Activated T-helper 2 cell treated with anti-CD3 and anti-CD28 coated beads, Interferon-gamma antibody, Interleukin-2, Interleukin-4, amounts not matched to agents 10 μg/mL and 5 μg/mL and 100 μg/mL, durations not matched to agents 14 hours and 24 hours and 36 hours (primary cell): ENCODE measurements at regions of chr1 and their contacts with region 1.

Region 1: DNA sequence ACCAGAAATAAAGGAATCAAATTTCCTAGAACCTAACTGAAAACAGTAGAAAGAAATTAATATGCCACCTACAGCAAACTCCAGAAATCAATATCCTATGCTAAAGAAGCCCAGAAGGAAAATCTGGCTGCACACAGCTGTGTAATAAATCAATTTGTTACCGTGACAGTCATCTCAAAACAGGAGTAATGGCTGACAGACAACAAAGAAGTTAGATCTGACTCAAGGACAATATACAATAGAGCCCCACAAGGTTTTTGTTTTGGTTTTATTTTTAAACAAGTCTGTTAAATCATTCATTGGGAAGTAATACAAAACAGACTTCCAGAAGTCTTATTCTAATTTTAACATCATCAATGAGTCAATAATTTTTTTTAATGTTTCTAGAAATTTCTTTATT is 168.4 kb downstream of the RERE start:
- DNase-seq: no peak
- H3K4me3 Mint-ChIP-seq: no peak overlapping the region
- H3K27ac Mint-ChIP-seq: peak overlapping the region; percentile 46
- H3K4me1 Mint-ChIP-seq: peaks cover 61% of the 10 kb centered on the region
- H3K27me3 Mint-ChIP-seq: no peaks in the 10 kb centered on the region

Region 2: GRCh38 chr1:8477166-8477982 is 171.7 kb before region 1 on chr1:
- intact Hi-C with region 1: no loop called
- DNase-seq: no peak
- H3K4me3 Mint-ChIP-seq: peak overlapping the region; percentile 47
- H3K27ac Mint-ChIP-seq: peak overlapping the region; percentile 88
- H3K4me1 Mint-ChIP-seq: peaks cover 62% of the 10 kb centered on the region
- H3K27me3 Mint-ChIP-seq: no peaks in the 10 kb centered on the region

Region 3: GRCh38 chr1:8604041-8604945 is 44.7 kb before region 1 on chr1:
- intact Hi-C with region 1: loop called (anchors 1 kb)
- DNase-seq: peak; percentile 46
- H3K4me3 Mint-ChIP-seq: peak overlapping the region; percentile 72
- H3K27ac Mint-ChIP-seq: peak overlapping the region; percentile 93
- H3K4me1 Mint-ChIP-seq: peaks cover 52% of the 10 kb centered on the region
- H3K27me3 Mint-ChIP-seq: no peaks in the 10 kb centered on the region

Region 4: DNA sequence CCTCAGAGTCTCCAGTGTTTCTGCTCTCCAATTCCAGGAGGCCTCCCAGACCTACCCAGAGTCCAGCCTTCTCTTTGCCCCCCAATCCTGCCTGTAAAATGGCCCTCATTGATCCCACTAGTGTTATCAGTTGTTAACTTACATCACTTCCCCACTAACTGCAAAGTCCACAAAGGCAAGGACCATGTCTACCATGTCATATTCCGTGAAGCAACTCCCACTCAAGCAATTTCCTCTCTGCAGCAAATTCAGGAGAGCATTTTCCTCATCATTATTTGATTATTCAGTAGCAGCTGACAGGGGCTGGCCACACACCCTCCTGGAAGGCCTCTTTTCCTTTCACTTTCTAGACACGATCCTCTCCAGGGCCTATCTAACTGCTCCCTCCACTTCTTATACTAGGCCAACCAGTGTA is 14.9 kb after region 1 on chr1:
- intact Hi-C with region 1: loop called (anchors 2 kb)
- DNase-seq: no peak
- H3K4me3 Mint-ChIP-seq: no peak overlapping the region
- H3K27ac Mint-ChIP-seq: no peak overlapping the region
- H3K4me1 Mint-ChIP-seq: peaks cover 21% of the 10 kb centered on the region
- H3K27me3 Mint-ChIP-seq: no peaks in the 10 kb centered on the region

Region 5: GRCh38 chr1:8679395-8679800 is 30.4 kb after region 1 on chr1:
- intact Hi-C with region 1: loop called (anchors 1 kb)
- DNase-seq: no peak
- H3K4me3 Mint-ChIP-seq: no peak overlapping the region
- H3K27ac Mint-ChIP-seq: no peak overlapping the region
- H3K4me1 Mint-ChIP-seq: peaks cover 52% of the 10 kb centered on the region
- H3K27me3 Mint-ChIP-seq: no peaks in the 10 kb centered on the region